ENCODE measurements at regions of chr4 and their contacts with region 1.

Region 1: DNA sequence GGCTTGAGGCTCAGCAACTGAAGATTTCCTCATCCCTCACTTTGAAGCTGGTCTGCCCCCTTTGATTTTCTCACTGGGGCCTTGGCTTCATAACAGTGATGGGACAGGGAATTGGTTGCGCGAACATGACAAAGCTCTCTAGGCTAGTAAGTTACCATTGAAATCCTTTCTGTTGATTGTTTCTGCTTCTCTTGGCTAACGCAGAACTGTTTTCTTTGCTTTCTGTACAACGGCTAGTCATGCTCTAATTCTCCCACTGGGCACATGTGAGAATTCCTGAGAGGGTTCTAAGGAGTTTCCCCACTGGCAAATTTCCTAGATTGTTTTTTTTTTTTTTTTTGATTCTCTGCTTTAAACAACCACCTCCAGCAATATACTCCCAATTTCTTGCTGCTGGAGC is 738.6 kb downstream of the PCDH7 start:
- DNase-seq: no peak
- H3K4me3 ChIP-seq: no peak overlapping the region
- H3K4me3 Mint-ChIP-seq: no peak overlapping the region
- H3K27ac Mint-ChIP-seq: no peak overlapping the region
- H3K4me1 ChIP-seq: no peaks in the 10 kb centered on the region
- H3K4me1 Mint-ChIP-seq: peaks cover 6% of the 10 kb centered on the region
- H3K27me3 ChIP-seq: no peaks in the 10 kb centered on the region
- H3K27me3 Mint-ChIP-seq: peaks cover 2% of the 10 kb centered on the region
- CTCF ChIP-seq: no peak

Region 2: GRCh38 chr4:31411565-31411964 is 47.2 kb before region 1 on chr4:
- CTCF ChIA-PET with region 1: no interaction called
- POLR2A ChIA-PET with region 1: no interaction called
- intact Hi-C with region 1: loop called (anchors 5 kb)
- DNase-seq: peak in 1 of 2 experiments; percentile 8
- H3K4me3 ChIP-seq: no peak overlapping the region
- H3K4me3 Mint-ChIP-seq: no peak overlapping the region
- H3K27ac Mint-ChIP-seq: no peak overlapping the region
- H3K4me1 ChIP-seq: peaks cover 17% of the 10 kb centered on the region
- H3K4me1 Mint-ChIP-seq: peaks cover 22% of the 10 kb centered on the region
- H3K27me3 ChIP-seq: no peaks in the 10 kb centered on the region
- H3K27me3 Mint-ChIP-seq: peaks cover 3% of the 10 kb centered on the region
- CTCF ChIP-seq: no peak

Measured in Caco-2 (cell line).